Heart left ventricle (tissue), 16 donors: ENCODE measurements at regions of chr7 and their contacts with region 1.

Region 1: GRCh38 chr7:130182990-130183389 is 22.2 kb downstream of the TMEM209 start:
- DNase-seq: no peak
- ATAC-seq: no peak
- H3K4me3 ChIP-seq: no peak overlapping the region
- H3K27ac ChIP-seq: no peak overlapping the region
- H3K4me1 ChIP-seq: no peaks in the 10 kb centered on the region
- H3K27me3 ChIP-seq: no peaks in the 10 kb centered on the region
- CTCF ChIP-seq: no peak
- POLR2A ChIP-seq: no peak

Region 2: GRCh38 chr7:130127821-130128317 is 55.1 kb before region 1 on chr7:
- intact Hi-C with region 1: loop called in 1 of 10 experiments (anchors 5 kb)
- DNase-seq: no peak
- ATAC-seq: no peak
- H3K4me3 ChIP-seq: no peak overlapping the region
- H3K27ac ChIP-seq: peak overlapping the region in 1 of 12 donors; percentile 15
- H3K4me1 ChIP-seq: peaks cover 0 to 11% (median 5%) of the 10 kb centered on the region in 12 donors
- H3K27me3 ChIP-seq: no peaks in the 10 kb centered on the region
- CTCF ChIP-seq: no peak
- POLR2A ChIP-seq: no peak